Mammary epithelial cell (primary cell): ENCODE measurements at regions of chr1 and their contacts with region 1.

Region 1: GRCh38 chr1:90201467-90202358 is 206.8 kb downstream of the ZNF326 start:
- DNase-seq: peak; percentile 2
- H3K4me3 ChIP-seq: no peak overlapping the region
- H3K27ac ChIP-seq: no peak overlapping the region
- H3K4me1 ChIP-seq: no peaks in the 10 kb centered on the region
- H3K27me3 ChIP-seq: no peaks in the 10 kb centered on the region
- CTCF ChIP-seq: no peak

Region 2: GRCh38 chr1:89719502-89720306 is 482.0 kb before region 1 on chr1:
- CTCF ChIA-PET with region 1: no interaction called
- dilution Hi-C with region 1: no loop called
- in situ Hi-C with region 1: no loop called
- intact Hi-C with region 1: no loop called
- DNase-seq: peak; percentile 20
- H3K4me3 ChIP-seq: no peak overlapping the region
- H3K27ac ChIP-seq: peak overlapping the region; percentile 3
- H3K4me1 ChIP-seq: peaks cover 19% of the 10 kb centered on the region
- H3K27me3 ChIP-seq: no peaks in the 10 kb centered on the region
- CTCF ChIP-seq: no peak

Region 3: DNA sequence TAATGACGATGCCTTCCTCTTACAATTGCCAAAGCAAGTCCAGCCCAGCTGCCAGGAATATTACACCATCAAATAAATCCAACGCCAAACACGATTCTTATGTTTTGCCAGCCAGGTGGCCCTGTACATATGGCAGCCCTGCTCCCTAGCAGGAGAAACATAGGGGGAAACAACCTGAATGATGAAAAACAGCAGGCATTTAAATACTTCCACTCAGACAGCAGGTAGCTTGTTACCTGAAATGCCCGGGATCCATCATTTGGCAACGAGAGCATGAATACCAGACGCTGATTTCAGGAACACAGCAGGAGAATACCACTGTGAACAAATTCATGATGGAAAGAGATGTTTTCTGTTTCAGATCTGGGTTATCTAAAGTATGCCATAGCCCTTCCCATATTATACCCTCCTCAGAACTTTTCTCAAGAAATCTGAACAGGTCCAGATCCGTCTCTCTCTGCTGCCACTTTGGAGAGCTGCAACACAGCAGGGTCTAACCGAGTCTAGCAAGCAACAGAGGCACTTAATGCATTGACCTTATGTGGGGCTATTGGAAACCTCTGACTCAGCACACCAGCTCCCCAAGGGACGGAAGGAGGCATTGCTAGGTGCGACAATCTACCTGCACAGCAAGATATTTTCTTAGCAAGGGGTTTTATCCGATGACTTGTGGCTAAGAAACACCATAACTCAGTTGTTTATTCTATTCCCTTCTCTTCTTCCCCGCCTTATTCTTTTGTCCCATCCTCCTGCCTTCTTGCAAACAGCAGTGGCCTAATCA is 349.1 kb after region 1 on chr1:
- CTCF ChIA-PET with region 1: interaction called, 13 read pairs
- dilution Hi-C with region 1: no loop called
- in situ Hi-C with region 1: no loop called
- intact Hi-C with region 1: no loop called
- DNase-seq: no peak
- H3K4me3 ChIP-seq: no peak overlapping the region
- H3K27ac ChIP-seq: no peak overlapping the region
- H3K4me1 ChIP-seq: no peaks in the 10 kb centered on the region
- H3K27me3 ChIP-seq: no peaks in the 10 kb centered on the region
- CTCF ChIP-seq: no peak